CD4-positive, alpha-beta memory T cell (primary cell): ENCODE measurements at regions of chr15 and their contacts with region 1.

Region 1: DNA sequence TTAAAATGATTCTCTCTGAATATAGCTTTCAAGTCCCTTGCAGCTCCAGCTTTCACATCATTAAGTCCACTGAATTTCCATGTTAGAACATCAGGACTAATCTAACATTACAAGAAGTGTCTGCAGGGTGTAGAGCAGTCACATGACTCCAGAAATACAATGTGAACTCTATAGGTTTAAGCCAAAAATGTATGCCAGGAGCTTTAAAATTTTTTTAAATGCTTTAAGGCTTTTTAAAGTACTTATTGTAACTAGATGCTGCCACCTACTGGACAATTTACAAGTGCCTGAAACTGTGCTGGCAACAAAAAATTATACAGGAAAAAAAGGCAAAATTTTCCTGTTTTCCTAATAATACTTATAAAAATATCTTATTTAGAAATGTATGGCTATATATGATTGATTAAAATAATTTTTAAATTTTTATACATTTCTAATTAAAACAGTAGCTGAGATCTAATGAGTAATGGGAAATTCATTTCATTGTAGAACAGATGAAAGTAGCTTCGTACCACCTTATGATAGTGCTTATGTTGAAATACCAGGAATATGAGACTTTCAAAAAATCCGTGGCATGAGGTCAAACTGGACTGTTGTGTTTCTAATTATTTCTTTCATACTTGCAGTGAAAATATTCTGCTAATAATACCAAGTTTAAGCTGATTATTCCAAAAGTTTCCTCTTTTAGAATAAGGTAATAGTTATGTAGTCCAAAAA is 25.7 kb downstream of the FSIP1 start:
- DNase-seq: peak in 4 of 5 donors; percentile 50 to 56 (median 54)
- H3K4me3 ChIP-seq: no peak overlapping the region
- H3K4me3 Mint-ChIP-seq: no peak overlapping the region
- H3K27ac ChIP-seq: no peak overlapping the region
- H3K27ac Mint-ChIP-seq: no peak overlapping the region
- H3K4me1 ChIP-seq: no peaks in the 10 kb centered on the region
- H3K4me1 Mint-ChIP-seq: no peaks in the 10 kb centered on the region
- H3K27me3 ChIP-seq: no peaks in the 10 kb centered on the region
- H3K27me3 Mint-ChIP-seq: peaks cover 0 to 3% of the 10 kb centered on the region in 2 donors

Region 2: GRCh38 chr15:38474155-38474757 is 1282.7 kb before region 1 on chr15:
- CTCF ChIA-PET with region 1: interaction called, 3 read pairs
- POLR2A ChIA-PET with region 1: no interaction called
- intact Hi-C with region 1: loop called (anchors 10 kb)
- DNase-seq: peak; percentile 57 to 73 (median 69)
- H3K4me3 ChIP-seq: no peak overlapping the region
- H3K4me3 Mint-ChIP-seq: peak overlapping the region in 1 of 8 donors; percentile 2
- H3K27ac ChIP-seq: peak overlapping the region; percentile 25
- H3K27ac Mint-ChIP-seq: peak overlapping the region; percentile 59 to 86 (median 81)
- H3K4me1 ChIP-seq: peaks cover 5% of the 10 kb centered on the region
- H3K4me1 Mint-ChIP-seq: peaks cover 8 to 9% (median 8%) of the 10 kb centered on the region in 4 donors
- H3K27me3 ChIP-seq: no peaks in the 10 kb centered on the region
- H3K27me3 Mint-ChIP-seq: no peaks in the 10 kb centered on the region

Region 3: DNA sequence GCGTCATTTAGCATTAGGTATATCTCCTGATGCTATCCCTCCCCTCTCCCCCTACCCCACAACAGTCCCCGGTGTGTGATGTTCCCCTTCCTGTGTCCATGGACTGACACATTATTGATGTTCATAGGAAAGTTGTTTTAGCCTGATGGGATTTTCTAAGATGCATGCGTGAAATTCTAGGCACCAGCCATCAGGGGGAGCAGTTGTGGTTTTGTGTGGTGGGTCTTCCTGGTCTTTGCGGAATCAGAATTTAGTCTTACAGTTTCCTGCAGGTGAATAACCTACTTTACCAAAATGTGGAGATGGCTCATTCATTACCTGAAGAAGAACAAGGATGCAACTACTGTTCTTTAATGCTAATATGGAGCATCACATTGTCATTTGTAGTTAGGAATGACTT is 631.1 kb before region 1 on chr15:
- CTCF ChIA-PET with region 1: interaction called, 12 read pairs
- POLR2A ChIA-PET with region 1: no interaction called
- intact Hi-C with region 1: no loop called
- DNase-seq: peak in 4 of 5 donors; percentile 7 to 25 (median 14)
- H3K4me3 ChIP-seq: no peak overlapping the region
- H3K4me3 Mint-ChIP-seq: no peak overlapping the region
- H3K27ac ChIP-seq: no peak overlapping the region
- H3K27ac Mint-ChIP-seq: no peak overlapping the region
- H3K4me1 ChIP-seq: no peaks in the 10 kb centered on the region
- H3K4me1 Mint-ChIP-seq: peaks cover 0 to 3% (median 0%) of the 10 kb centered on the region in 4 donors
- H3K27me3 ChIP-seq: no peaks in the 10 kb centered on the region
- H3K27me3 Mint-ChIP-seq: peaks cover 9 to 10% of the 10 kb centered on the region in 2 donors

Region 4: GRCh38 chr15:39594056-39594763 is 162.8 kb before region 1 on chr15:
- CTCF ChIA-PET with region 1: interaction called, 132 read pairs
- POLR2A ChIA-PET with region 1: interaction called, 19 read pairs
- intact Hi-C with region 1: loop called (anchors 1 kb)
- DNase-seq: peak in 4 of 5 donors; percentile 40 to 45 (median 42)
- H3K4me3 ChIP-seq: no peak overlapping the region
- H3K4me3 Mint-ChIP-seq: peak overlapping the region in 6 of 8 donors; percentile 13 to 78 (median 52)
- H3K27ac ChIP-seq: peak overlapping the region; percentile 22
- H3K27ac Mint-ChIP-seq: peak overlapping the region in 5 of 7 donors; percentile 3 to 77 (median 67)
- H3K4me1 ChIP-seq: peaks cover 5% of the 10 kb centered on the region
- H3K4me1 Mint-ChIP-seq: peaks cover 3 to 9% (median 6%) of the 10 kb centered on the region in 4 donors
- H3K27me3 ChIP-seq: no peaks in the 10 kb centered on the region
- H3K27me3 Mint-ChIP-seq: no peaks in the 10 kb centered on the region

Region 5: GRCh38 chr15:39692356-39693327 is 64.3 kb before region 1 on chr15:
- CTCF ChIA-PET with region 1: interaction called, 41 read pairs
- POLR2A ChIA-PET with region 1: no interaction called
- intact Hi-C with region 1: no loop called
- DNase-seq: no peak
- H3K4me3 ChIP-seq: no peak overlapping the region
- H3K4me3 Mint-ChIP-seq: no peak overlapping the region
- H3K27ac ChIP-seq: no peak overlapping the region
- H3K27ac Mint-ChIP-seq: no peak overlapping the region
- H3K4me1 ChIP-seq: no peaks in the 10 kb centered on the region
- H3K4me1 Mint-ChIP-seq: peaks cover 0 to 10% (median 3%) of the 10 kb centered on the region in 4 donors
- H3K27me3 ChIP-seq: no peaks in the 10 kb centered on the region
- H3K27me3 Mint-ChIP-seq: peaks cover 7 to 9% of the 10 kb centered on the region in 2 donors

Region 6: GRCh38 chr15:39782441-39783138 is 25.6 kb after region 1 on chr15 and contains the start of gene FSIP1:
- CTCF ChIA-PET with region 1: interaction called, 10 read pairs
- POLR2A ChIA-PET with region 1: no interaction called
- intact Hi-C with region 1: no loop called
- DNase-seq: peak; percentile 96 to 99 (median 97)
- H3K4me3 ChIP-seq: peak within 1 kb of the TSS; percentile 97 to 100
- H3K4me3 Mint-ChIP-seq: peak within 1 kb of the TSS; percentile 88 to 98 (median 96)
- H3K27ac ChIP-seq: peak within 1 kb of the TSS; percentile 60
- H3K27ac Mint-ChIP-seq: peak within 1 kb of the TSS; percentile 83 to 97 (median 93)
- H3K4me1 ChIP-seq: peaks cover 38% of the 10 kb centered on the region
- H3K4me1 Mint-ChIP-seq: peaks cover 28 to 55% (median 44%) of the 10 kb centered on the region in 4 donors
- H3K27me3 ChIP-seq: no peaks in the 10 kb centered on the region
- H3K27me3 Mint-ChIP-seq: no peaks in the 10 kb centered on the region
- total RNA-seq, gene FSIP1: 0.47 to 1.1 TPM